ENCODE measurements at regions of chr19 and their contacts with region 1.

Region 1: DNA sequence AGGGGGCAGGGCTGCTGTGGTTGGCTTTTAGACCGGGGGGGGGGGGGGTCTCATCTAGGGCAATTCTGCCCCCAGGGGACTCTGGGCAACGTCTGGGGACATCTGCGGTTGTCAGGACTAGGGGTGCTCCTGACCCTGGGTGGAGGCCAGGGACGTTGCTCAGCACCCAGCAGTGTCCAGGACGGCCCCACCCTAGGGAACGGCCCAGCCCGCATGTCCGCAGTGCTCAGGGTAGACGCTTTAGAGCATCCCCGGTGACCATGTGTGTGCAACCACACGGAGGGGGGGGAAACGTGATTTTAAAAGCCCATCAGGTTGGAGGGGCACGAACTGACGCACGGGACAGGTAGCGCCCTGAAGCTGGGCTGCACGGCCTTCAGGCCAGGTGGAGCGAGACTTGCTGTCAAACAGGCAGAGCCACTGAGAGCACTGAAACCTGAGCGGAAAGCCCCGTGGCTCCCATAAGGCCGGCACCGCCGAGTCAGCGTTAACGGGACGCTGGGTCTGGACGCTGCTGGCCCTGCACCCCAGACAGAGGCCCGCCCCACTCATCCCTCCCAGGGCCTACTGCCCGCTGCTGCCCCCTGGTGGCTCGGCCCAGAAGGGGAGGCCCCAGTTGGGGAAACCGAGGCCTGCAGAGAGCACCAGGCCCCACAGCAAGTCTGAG is 8.3 kb downstream of the CACTIN start:
- DNase-seq: peak; percentile 80
- ATAC-seq: peak; percentile 81
- H3K4me3 ChIP-seq: no peak overlapping the region
- H3K27ac ChIP-seq: no peak overlapping the region
- H3K4me1 ChIP-seq: no peaks in the 10 kb centered on the region
- H3K27me3 ChIP-seq: no peaks in the 10 kb centered on the region
- CTCF ChIP-seq: peak; percentile 88

Region 2: GRCh38 chr19:3333662-3334061 is 284.6 kb before region 1 on chr19:
- intact Hi-C with region 1: no loop called
- DNase-seq: no peak
- ATAC-seq: no peak
- H3K4me3 ChIP-seq: no peak overlapping the region
- H3K27ac ChIP-seq: no peak overlapping the region
- H3K4me1 ChIP-seq: peaks cover 36% of the 10 kb centered on the region
- H3K27me3 ChIP-seq: no peaks in the 10 kb centered on the region
- CTCF ChIP-seq: no peak

Region 3: GRCh38 chr19:3375221-3376090 is 242.8 kb before region 1 on chr19:
- intact Hi-C with region 1: no loop called
- DNase-seq: peak; percentile 80
- ATAC-seq: peak; percentile 75
- H3K4me3 ChIP-seq: peak overlapping the region; percentile 5
- H3K27ac ChIP-seq: peak overlapping the region; percentile 76
- H3K4me1 ChIP-seq: peaks cover 28% of the 10 kb centered on the region
- H3K27me3 ChIP-seq: no peaks in the 10 kb centered on the region
- CTCF ChIP-seq: no peak

Region 4: GRCh38 chr19:3544742-3545668 is 73.3 kb before region 1 on chr19:
- intact Hi-C with region 1: loop called (anchors 10 kb)
- DNase-seq: peak; percentile 87
- ATAC-seq: peak; percentile 81
- H3K4me3 ChIP-seq: no peak overlapping the region
- H3K27ac ChIP-seq: no peak overlapping the region
- H3K4me1 ChIP-seq: no peaks in the 10 kb centered on the region
- H3K27me3 ChIP-seq: no peaks in the 10 kb centered on the region
- CTCF ChIP-seq: peak; percentile 95

Region 5: DNA sequence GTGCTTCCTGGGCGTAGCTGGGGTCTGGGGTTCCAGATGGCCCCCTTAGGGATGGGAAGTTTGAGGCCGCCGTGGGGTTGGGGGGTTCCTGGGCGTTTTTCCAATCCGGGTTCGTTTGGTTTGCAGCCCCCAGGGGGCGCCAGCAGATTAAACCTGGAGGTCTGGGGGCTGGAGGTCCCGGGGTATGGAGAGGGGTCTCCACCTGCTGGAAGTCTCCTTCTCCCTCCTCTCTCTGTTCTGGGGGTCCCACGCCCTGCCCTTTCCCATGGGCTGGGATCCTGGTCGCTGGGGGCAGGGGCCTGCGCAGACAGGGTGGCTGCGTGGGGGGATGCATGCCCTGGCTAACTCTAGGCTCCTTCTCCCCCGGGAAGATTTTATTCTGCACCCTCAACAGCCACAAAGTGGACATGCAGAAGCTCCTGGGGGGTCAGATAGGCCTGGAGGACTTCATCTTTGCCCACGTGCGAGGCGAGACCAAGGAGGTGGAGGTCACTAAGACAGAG is 32.1 kb before region 1 on chr19:
- intact Hi-C with region 1: loop called (anchors 5 kb)
- DNase-seq: no peak
- ATAC-seq: peak; percentile 37
- H3K4me3 ChIP-seq: peak overlapping the region; percentile 47
- H3K27ac ChIP-seq: no peak overlapping the region
- H3K4me1 ChIP-seq: peaks cover 3% of the 10 kb centered on the region
- H3K27me3 ChIP-seq: peaks cover 19% of the 10 kb centered on the region
- CTCF ChIP-seq: peak; percentile 59

Region 6: GRCh38 chr19:3683405-3684053 is 65.3 kb after region 1 on chr19:
- intact Hi-C with region 1: no loop called
- DNase-seq: no peak
- ATAC-seq: peak; percentile 54
- H3K4me3 ChIP-seq: no peak overlapping the region
- H3K27ac ChIP-seq: no peak overlapping the region
- H3K4me1 ChIP-seq: peaks cover 14% of the 10 kb centered on the region
- H3K27me3 ChIP-seq: no peaks in the 10 kb centered on the region
- CTCF ChIP-seq: no peak